Activated CD8-positive, alpha-beta memory T cell treated with anti-CD3 and anti-CD28 coated beads, Interleukin-2, amount 10 ng/mL, durations not matched to agents 7 days and 5 days (primary cell): ENCODE measurements at regions of chr1 and their contacts with region 1.

Region 1: GRCh38 chr1:108559215-108560186 is at the start of gene EEIG2:
- DNase-seq: peak; percentile 92
- ATAC-seq: peak; percentile 84
- H3K4me3 Mint-ChIP-seq: peak within 1 kb of the TSS; percentile 94
- H3K27ac Mint-ChIP-seq: peak within 1 kb of the TSS; percentile 88
- H3K4me1 Mint-ChIP-seq: peaks cover 43% of the 10 kb centered on the region
- H3K27me3 Mint-ChIP-seq: no peaks in the 10 kb centered on the region
- total RNA-seq, gene EEIG2: 11.9 to 16.4 TPM

Region 2: GRCh38 chr1:108199781-108200570 is 359.5 kb before region 1 on chr1 and contains the start of gene SLC25A24:
- CTCF ChIA-PET with region 1: interaction called, 11 read pairs
- DNase-seq: peak; percentile 89
- ATAC-seq: peak; percentile 98
- H3K4me3 Mint-ChIP-seq: peak within 1 kb of the TSS; percentile 90
- H3K27ac Mint-ChIP-seq: peak within 1 kb of the TSS; percentile 87
- H3K4me1 Mint-ChIP-seq: peaks cover 38% of the 10 kb centered on the region
- H3K27me3 Mint-ChIP-seq: peaks cover 4% of the 10 kb centered on the region
- total RNA-seq, gene SLC25A24: 24.8 to 25.7 TPM

Region 3: DNA sequence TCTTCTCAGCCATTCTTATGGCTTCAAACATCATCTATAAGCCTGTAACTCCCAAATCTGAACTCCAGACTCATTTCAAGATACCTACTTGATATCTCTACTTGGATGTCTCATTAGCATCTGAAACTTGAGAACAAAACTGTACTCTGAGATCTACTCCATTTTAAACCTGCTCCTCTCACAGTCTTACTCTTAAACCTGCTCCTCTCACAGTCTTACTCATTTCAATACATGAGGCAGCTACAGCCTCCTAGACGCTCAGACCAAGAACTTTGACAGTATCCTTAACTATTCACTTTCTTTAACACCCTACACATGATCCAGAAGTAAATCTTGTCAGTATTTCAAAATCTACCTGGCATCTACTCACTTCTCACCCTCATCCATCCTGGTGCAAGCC is 55.1 kb before region 1 on chr1:
- CTCF ChIA-PET with region 1: interaction called, 67 read pairs
- DNase-seq: no peak
- ATAC-seq: peak; percentile 79
- H3K4me3 Mint-ChIP-seq: no peak overlapping the region
- H3K27ac Mint-ChIP-seq: no peak overlapping the region
- H3K4me1 Mint-ChIP-seq: no peaks in the 10 kb centered on the region
- H3K27me3 Mint-ChIP-seq: peaks cover 51% of the 10 kb centered on the region

Region 4: DNA sequence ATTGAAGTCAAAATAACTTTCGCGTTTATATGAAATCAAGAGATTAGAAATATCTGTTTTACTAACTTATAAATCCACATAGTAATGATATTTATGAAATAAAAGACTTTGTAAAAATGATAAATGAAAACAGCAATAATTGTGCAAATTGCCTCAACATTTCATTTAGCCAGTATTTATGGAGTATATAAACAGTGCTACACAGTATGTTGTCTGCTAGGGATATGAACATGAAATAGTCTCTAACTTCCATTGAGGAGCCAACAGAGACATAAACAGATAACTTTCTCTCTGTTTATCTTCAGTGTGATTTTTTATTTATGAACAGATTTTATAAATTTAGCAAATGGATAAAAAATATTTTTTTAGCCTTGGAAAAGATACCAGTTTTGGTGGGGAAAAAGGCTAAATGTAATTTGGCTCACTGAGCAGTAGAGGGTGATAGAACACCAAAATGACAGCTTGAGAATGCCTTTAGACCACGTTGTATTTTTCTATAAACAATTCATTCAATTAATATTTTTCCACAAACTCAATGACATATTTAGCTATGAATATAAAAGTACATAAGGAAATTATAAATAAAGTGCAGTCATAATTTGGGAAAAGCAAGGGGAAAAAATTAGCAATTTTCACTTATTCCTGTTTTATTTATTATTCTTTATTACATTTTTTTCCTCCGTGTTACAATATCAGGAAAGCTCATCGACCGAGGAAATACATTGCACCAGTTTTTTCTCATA is 47.1 kb before region 1 on chr1:
- CTCF ChIA-PET with region 1: interaction called, 67 read pairs
- DNase-seq: no peak
- ATAC-seq: no peak
- H3K4me3 Mint-ChIP-seq: no peak overlapping the region
- H3K27ac Mint-ChIP-seq: no peak overlapping the region
- H3K4me1 Mint-ChIP-seq: no peaks in the 10 kb centered on the region
- H3K27me3 Mint-ChIP-seq: peaks cover 48% of the 10 kb centered on the region

Region 5: DNA sequence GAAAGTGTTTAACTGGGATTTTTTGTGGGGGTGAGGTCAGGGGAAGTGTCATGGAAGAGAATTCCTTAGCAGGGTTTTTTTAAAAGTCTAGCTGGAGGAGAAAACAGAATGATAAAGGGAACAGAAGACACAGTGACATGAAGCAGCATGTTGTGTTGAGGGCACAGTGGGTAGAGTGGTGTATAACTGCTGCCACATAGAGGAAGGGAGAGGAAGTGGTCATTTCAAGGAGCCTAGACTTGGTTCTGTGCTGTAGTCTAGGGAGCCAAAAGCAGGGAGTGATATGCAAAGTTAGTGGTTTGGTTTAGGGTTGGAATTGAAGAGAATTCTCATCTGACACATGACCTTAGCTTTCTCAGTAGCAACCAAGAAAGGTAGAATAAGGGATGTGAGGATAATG is 10.6 kb after region 1 on chr1:
- CTCF ChIA-PET with region 1: interaction called, 21 read pairs
- DNase-seq: peak; percentile 61
- ATAC-seq: peak; percentile 99
- H3K4me3 Mint-ChIP-seq: no peak overlapping the region
- H3K27ac Mint-ChIP-seq: no peak overlapping the region
- H3K4me1 Mint-ChIP-seq: no peaks in the 10 kb centered on the region
- H3K27me3 Mint-ChIP-seq: no peaks in the 10 kb centered on the region

Region 6: GRCh38 chr1:108643492-108644335 is 84.2 kb after region 1 on chr1:
- CTCF ChIA-PET with region 1: interaction called, 100 read pairs
- DNase-seq: peak; percentile 74
- ATAC-seq: no peak
- H3K4me3 Mint-ChIP-seq: no peak overlapping the region
- H3K27ac Mint-ChIP-seq: peak overlapping the region; percentile 100
- H3K4me1 Mint-ChIP-seq: peaks cover 75% of the 10 kb centered on the region
- H3K27me3 Mint-ChIP-seq: no peaks in the 10 kb centered on the region